ENCODE measurements at regions of chr17 and their contacts with region 1.

Region 1: GRCh38 chr17:64025732-64026294 is 5.4 kb upstream of the ICAM2 start:
- DNase-seq: peak; percentile 96
- H3K4me3 Mint-ChIP-seq: peak overlapping the region; percentile 56
- H3K27ac Mint-ChIP-seq: peak overlapping the region; percentile 92
- H3K4me1 Mint-ChIP-seq: peaks cover 75% of the 10 kb centered on the region
- H3K27me3 Mint-ChIP-seq: no peaks in the 10 kb centered on the region

Region 2: GRCh38 chr17:63786971-63787711 is 238.7 kb before region 1 on chr17:
- CTCF ChIA-PET with region 1: no interaction called
- DNase-seq: no peak
- H3K4me3 Mint-ChIP-seq: no peak overlapping the region
- H3K27ac Mint-ChIP-seq: no peak overlapping the region
- H3K4me1 Mint-ChIP-seq: peaks cover 18% of the 10 kb centered on the region
- H3K27me3 Mint-ChIP-seq: no peaks in the 10 kb centered on the region

Region 3: GRCh38 chr17:63911657-63912426 is 114.0 kb before region 1 on chr17:
- CTCF ChIA-PET with region 1: interaction called, 40 read pairs
- DNase-seq: peak; percentile 77
- H3K4me3 Mint-ChIP-seq: no peak overlapping the region
- H3K27ac Mint-ChIP-seq: no peak overlapping the region
- H3K4me1 Mint-ChIP-seq: peaks cover 2% of the 10 kb centered on the region
- H3K27me3 Mint-ChIP-seq: peaks cover 63% of the 10 kb centered on the region

Region 4: DNA sequence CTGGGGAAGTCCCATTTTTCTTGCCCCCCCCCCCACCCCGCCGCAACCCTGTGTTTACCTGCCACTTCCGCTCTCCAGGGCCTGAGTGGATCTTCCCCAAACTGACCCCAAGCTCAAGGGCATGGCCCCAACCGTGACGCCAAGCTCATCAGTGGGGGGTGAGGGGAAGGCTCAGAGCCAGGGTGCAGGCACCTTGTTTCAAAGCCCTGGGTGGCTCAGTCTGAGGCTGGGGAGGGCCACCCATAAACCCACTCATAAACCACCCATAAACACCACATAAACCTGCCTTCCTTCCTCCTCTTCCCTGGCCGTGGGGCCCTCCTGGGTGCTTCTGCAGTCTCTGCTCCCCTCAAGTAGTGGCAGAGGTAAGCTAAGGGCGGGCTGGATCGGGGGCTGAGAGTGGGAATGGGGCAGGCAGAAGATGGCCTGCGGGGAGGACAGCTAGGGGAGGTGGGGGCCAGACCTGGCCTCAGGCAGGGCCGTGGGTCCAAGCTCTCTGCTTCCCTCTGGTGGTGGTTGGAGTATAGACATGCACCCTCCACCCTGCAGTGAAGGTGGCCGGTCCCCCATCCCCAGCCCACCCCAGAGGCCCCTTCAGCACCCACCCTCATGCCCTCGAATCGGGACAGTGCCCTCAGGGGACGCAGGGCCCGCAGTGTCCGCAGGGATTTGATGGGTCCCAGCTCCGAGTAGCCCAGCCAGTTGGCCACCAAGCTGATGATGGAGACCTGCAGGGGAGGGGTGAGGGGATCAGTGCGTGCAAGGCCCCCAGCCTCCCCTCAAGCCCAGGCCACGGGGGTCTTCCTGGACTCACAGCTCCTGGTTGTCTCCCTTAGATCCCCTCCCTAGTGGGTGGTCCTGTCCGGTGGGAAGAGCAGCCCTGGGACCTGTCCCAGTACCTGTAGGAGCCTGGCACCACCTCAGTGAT is 79.1 kb before region 1 on chr17:
- CTCF ChIA-PET with region 1: interaction called, 18 read pairs
- DNase-seq: peak; percentile 72
- H3K4me3 Mint-ChIP-seq: peak overlapping the region; percentile 54
- H3K27ac Mint-ChIP-seq: peak overlapping the region; percentile 85
- H3K4me1 Mint-ChIP-seq: peaks cover 23% of the 10 kb centered on the region
- H3K27me3 Mint-ChIP-seq: peaks cover 81% of the 10 kb centered on the region

Region 5: GRCh38 chr17:63998050-63998720 is 27.6 kb before region 1 on chr17 and contains the start of gene PRR29:
- CTCF ChIA-PET with region 1: interaction called, 23 read pairs
- DNase-seq: peak; percentile 86
- H3K4me3 Mint-ChIP-seq: peak within 1 kb of the TSS; percentile 90
- H3K27ac Mint-ChIP-seq: peak within 1 kb of the TSS; percentile 71
- H3K4me1 Mint-ChIP-seq: peaks cover 58% of the 10 kb centered on the region
- H3K27me3 Mint-ChIP-seq: peaks cover 50% of the 10 kb centered on the region

Region 6: GRCh38 chr17:64051153-64051552 is 25.3 kb after region 1 on chr17:
- CTCF ChIA-PET with region 1: interaction called, 28 read pairs
- DNase-seq: peak; percentile 36
- H3K4me3 Mint-ChIP-seq: no peak overlapping the region
- H3K27ac Mint-ChIP-seq: peak overlapping the region; percentile 97
- H3K4me1 Mint-ChIP-seq: peaks cover 56% of the 10 kb centered on the region
- H3K27me3 Mint-ChIP-seq: no peaks in the 10 kb centered on the region

Region 7: DNA sequence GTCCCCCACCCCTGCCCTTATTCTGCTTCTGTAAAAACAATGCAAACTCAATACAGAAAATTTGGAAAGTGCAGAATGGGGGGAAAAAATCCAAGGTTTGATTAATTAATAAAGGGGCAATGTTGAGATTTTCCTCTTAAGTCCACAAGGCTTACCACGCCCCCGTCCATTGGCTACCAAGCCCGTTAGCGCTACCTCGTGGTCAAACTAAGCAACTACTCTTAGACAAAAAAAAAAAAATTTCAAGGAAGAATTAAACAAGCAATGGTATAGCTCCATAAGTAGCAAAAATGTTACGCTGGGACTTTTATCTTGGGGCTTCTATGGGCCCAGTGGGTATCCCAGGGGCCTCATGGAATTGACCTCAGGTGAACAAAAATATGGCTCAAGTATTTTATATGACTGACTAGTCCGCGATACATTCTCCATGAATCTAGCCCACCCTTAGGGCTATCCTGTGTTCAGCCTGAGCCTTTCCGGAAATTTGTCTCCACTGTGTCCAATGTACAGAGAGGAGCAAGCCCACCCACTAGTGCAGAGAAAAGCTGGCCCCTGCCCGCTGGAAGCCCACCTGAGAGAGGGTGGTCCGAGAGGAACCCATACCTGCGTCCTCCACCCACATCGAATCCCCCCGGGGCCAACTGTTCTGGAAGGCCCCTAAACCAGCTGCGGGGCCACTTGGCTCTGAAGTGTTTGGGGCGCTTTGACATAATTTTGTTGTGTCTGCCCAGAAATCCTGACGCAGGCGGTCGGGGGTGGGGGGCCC is 256.3 kb after region 1 on chr17:
- CTCF ChIA-PET with region 1: interaction called, 19 read pairs
- DNase-seq: peak; percentile 70
- H3K4me3 Mint-ChIP-seq: no peak overlapping the region
- H3K27ac Mint-ChIP-seq: no peak overlapping the region
- H3K4me1 Mint-ChIP-seq: peaks cover 7% of the 10 kb centered on the region
- H3K27me3 Mint-ChIP-seq: peaks cover 20% of the 10 kb centered on the region

Measured in activated naive CD4-positive, alpha-beta T cell treated with anti-CD3 and anti-CD28 coated beads, Interleukin-2, amount 10 ng/mL, durations not matched to agents 7 days and 5 days (primary cell).